ENCODE measurements at regions of chr17 and their contacts with region 1.

Region 1: DNA sequence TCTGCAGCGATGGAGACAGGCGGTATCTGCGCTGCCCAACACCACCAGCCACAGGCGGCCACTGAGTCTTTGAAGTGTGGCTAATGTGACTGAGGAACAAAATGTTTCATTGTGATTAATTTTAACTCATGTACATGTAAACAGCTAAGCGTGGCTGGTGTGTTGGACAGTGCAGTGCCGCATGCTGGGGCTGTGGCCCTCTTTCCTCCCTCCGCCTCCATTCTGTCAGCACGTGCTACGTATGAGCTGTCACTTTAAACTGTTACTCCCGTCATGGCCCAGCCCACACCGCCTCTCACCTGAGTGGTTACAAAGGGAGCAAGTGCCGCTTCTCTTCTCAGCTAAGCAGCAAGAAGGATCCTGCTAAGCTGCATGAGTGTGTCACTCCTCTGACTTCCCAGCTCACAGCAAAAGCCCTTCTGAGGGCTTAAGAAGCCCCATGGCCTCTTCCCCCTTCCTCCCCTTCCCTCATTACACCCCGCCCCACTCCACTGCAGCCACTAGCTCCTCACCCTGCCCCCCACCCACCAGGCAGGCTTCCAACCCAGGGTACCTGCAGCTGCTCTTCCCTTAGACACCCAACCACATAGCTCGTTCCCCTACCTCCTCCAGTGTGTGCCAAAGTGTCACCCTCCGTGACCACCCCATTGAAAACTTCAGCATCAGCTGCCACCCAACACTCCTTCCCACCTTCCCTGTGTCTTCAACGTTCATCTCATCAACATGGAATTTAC is 15.0 kb downstream of the HASPIN start:
- DNase-seq: peak in 3 of 4 experiments; percentile 28 to 39 (median 33)
- ATAC-seq: peak; percentile 69
- H3K4me3 ChIP-seq: no peak overlapping the region
- H3K27ac ChIP-seq: no peak overlapping the region
- H3K4me1 ChIP-seq: peaks cover 4 to 10% of the 10 kb centered on the region in 2 experiments; a peak in 2 of 5 replicates
- H3K27me3 ChIP-seq: peaks cover 0 to 6% of the 10 kb centered on the region in 2 experiments; a peak in 2 of 5 replicates
- CTCF ChIP-seq: no peak
- EP300 ChIP-seq: no peak
- POLR2A ChIP-seq: no peak
- RAD21 ChIP-seq: no peak

Region 2: DNA sequence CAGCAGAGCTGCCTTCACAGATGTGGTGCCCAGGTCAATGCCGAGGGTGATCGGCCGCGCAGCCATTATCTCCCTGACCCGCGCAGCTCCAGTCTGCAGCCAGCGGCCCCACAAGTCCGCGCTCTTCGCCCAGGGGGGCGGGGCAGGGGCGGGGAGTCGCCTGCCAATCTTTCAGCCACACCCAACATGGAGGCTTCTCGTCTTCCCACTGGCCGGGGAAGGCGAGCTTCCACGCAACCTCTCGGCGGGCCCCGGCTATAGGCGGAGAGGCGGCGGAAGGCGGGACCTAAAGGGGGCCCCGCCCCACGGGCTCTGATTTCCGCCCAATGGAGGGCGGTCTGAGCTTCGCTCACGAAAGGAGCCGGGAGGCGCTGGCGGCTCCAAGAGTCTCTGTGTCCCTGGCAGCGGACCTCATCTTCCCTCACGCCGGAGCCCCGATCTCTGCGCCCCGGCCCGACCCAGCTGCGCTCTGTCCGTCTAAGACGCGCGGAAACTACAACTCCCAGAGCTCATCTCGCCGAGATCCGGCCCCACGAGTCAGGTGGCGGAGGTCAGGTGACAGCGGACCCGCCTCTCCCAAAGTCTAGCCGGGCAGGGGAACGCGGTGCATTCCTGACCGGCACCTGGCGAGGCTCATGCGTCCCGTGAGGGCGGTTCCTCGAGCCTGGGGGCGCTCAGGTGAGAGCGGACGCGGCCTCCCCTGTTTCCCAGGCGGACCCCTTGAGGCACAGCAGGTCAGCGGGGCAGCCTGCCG is 102.4 kb before region 1 on chr17 and contains the starts of genes CTNS and SHPK:
- CTCF ChIA-PET with region 1: no interaction called
- POLR2A ChIA-PET with region 1: no interaction called
- in situ Hi-C with region 1: no loop called
- intact Hi-C with region 1: no loop called
- DNase-seq: peak; percentile 92 to 96 (median 95)
- ATAC-seq: peak; percentile 97
- H3K4me3 ChIP-seq: peak within 1 kb of the TSS; percentile 63
- H3K27ac ChIP-seq: peak within 1 kb of the TSS; percentile 66
- H3K4me1 ChIP-seq: peaks cover 16 to 28% of the 10 kb centered on the region in 2 experiments
- H3K27me3 ChIP-seq: no peaks in the 10 kb centered on the region
- CTCF ChIP-seq: no peak
- EP300 ChIP-seq: no peak
- POLR2A ChIP-seq: peak; percentile 70
- RAD21 ChIP-seq: no peak
- polyA plus RNA-seq, gene CTNS: 0.66 to 1.0 TPM
- polyA plus RNA-seq, gene SHPK: 2.5 to 2.6 TPM

Region 3: GRCh38 chr17:3827124-3827773 is 88.5 kb after region 1 on chr17:
- CTCF ChIA-PET with region 1: interaction called, 13 read pairs
- POLR2A ChIA-PET with region 1: no interaction called
- in situ Hi-C with region 1: no loop called
- intact Hi-C with region 1: loop called (anchors 1 kb)
- DNase-seq: peak; percentile 32 to 67 (median 40)
- ATAC-seq: peak; percentile 39; the same call in 1 of the 3 replicates
- H3K4me3 ChIP-seq: no peak overlapping the region
- H3K27ac ChIP-seq: no peak overlapping the region
- H3K4me1 ChIP-seq: no peaks in the 10 kb centered on the region
- H3K27me3 ChIP-seq: no peaks in the 10 kb centered on the region
- CTCF ChIP-seq: peak; percentile 55 to 69 (median 68)
- EP300 ChIP-seq: no peak
- POLR2A ChIP-seq: no peak
- RAD21 ChIP-seq: peak; percentile 23 to 58; a peak in 3 of 4 replicates

Region 4: DNA sequence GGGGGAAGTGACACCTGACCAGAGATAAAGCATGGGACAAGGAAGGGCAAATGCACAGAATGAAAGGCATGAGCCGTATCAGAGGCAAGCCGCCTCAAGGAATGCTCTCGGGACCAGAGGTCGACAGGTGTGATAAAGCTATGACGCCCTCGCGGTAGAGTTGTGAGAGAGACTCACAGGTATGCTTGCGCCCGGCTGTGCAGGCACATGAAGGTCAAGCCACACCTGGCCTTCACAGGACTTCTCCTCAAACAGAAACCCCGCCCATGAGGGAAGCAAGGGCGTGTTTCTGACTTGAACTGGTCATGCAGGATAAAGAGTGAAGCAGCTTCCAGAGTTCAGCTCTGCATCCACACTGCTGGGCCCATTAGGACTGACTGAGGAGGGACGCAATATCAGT is 99.5 kb after region 1 on chr17:
- CTCF ChIA-PET with region 1: no interaction called
- POLR2A ChIA-PET with region 1: no interaction called
- in situ Hi-C with region 1: no loop called
- intact Hi-C with region 1: no loop called
- DNase-seq: no peak
- ATAC-seq: no peak
- H3K4me3 ChIP-seq: no peak overlapping the region
- H3K27ac ChIP-seq: no peak overlapping the region
- H3K4me1 ChIP-seq: no peaks in the 10 kb centered on the region
- H3K27me3 ChIP-seq: no peaks in the 10 kb centered on the region
- CTCF ChIP-seq: no peak
- EP300 ChIP-seq: no peak
- POLR2A ChIP-seq: no peak
- RAD21 ChIP-seq: no peak

Region 5: GRCh38 chr17:3851461-3852100 is 112.9 kb after region 1 on chr17:
- CTCF ChIA-PET with region 1: no interaction called
- POLR2A ChIA-PET with region 1: no interaction called
- in situ Hi-C with region 1: no loop called
- intact Hi-C with region 1: no loop called
- DNase-seq: no peak
- ATAC-seq: no peak
- H3K4me3 ChIP-seq: no peak overlapping the region
- H3K27ac ChIP-seq: no peak overlapping the region
- H3K4me1 ChIP-seq: peaks cover 0 to 5% of the 10 kb centered on the region in 2 experiments; a peak in 3 of 5 replicates
- H3K27me3 ChIP-seq: peaks cover 2 to 5% of the 10 kb centered on the region in 2 experiments; a peak in 2 of 5 replicates
- CTCF ChIP-seq: no peak
- EP300 ChIP-seq: no peak
- POLR2A ChIP-seq: no peak
- RAD21 ChIP-seq: no peak

Measured in K562 (cell line).